A549 (cell line): ENCODE measurements at regions of chr7 and their contacts with region 1.

Region 1: DNA sequence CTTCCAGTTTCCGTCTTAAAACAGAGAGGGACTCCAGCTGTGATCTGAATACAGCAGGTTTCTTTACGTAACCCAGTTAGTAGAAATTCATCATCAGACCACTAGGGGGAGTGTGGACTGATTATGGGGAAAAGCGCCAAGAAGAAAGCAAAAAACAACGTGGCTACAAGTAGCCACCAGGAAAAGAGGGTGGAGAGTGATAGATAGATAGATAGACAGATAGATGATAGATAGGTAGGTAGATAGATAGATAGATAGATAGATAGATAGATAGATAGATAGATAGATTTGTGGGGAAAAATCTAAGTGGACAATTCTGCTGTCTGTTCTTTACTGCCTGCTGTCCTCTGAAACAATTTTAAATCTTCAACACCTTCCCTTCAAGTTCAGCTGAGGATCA is 12.7 kb upstream of the AKR1B10 start:
- DNase-seq: peak; percentile 91 to 92
- ATAC-seq: peak; percentile 63 to 71
- H3K4me3 ChIP-seq: no peak overlapping the region
- H3K27ac ChIP-seq: peak overlapping the region; percentile 68 to 83
- H3K4me1 ChIP-seq: peaks cover 37% of the 10 kb centered on the region
- CTCF ChIP-seq: peak; percentile 97
- EP300 ChIP-seq: no peak
- POLR2A ChIP-seq: no peak
- RAD21 ChIP-seq: peak; percentile 71 to 82

Region 2: DNA sequence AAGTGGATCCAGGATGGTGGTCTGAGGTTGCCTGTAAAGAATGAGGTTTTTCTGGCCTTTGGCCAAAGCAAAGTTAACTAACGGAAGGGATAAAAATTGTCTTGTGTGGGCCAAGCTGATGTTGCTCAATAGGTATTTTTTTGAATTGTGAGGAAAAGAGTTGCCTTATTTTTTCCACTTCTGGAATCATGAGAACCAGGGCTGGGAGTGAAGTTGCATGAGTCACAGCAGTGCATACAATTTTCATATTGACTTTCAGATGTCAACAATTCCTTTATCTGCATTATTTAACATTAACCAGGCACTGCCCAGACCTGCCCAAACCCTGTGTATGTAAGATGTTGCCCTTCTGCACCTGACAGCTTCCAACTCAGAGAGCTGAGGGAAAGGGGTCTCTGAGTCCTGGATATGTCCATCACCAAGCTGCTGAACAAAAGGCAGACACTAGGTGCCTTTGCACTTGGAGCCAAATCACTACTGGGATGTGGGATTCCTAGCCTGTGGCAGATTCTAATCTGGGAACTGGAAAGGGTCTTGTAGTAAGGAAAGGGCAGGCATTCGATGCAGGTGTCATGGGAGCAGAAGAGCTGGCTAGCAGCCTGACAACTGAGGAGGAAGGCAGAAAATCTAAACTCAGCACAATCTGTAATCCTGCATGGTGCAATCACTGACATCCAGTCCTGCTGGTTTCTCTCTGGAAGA is 145.7 kb before region 1 on chr7:
- CTCF ChIA-PET with region 1: interaction called, 31 read pairs
- POLR2A ChIA-PET with region 1: interaction called, 3 read pairs
- DNase-seq: peak; percentile 81 to 97
- ATAC-seq: peak; percentile 45 to 81
- H3K4me3 ChIP-seq: no peak overlapping the region
- H3K27ac ChIP-seq: peak overlapping the region; percentile 89 to 90
- H3K4me1 ChIP-seq: peaks cover 61% of the 10 kb centered on the region
- CTCF ChIP-seq: no peak
- EP300 ChIP-seq: peak; percentile 96 to 97
- POLR2A ChIP-seq: no peak
- RAD21 ChIP-seq: peak in 1 of 2 experiments; percentile 69; a peak in 4 of 5 replicates

Region 3: DNA sequence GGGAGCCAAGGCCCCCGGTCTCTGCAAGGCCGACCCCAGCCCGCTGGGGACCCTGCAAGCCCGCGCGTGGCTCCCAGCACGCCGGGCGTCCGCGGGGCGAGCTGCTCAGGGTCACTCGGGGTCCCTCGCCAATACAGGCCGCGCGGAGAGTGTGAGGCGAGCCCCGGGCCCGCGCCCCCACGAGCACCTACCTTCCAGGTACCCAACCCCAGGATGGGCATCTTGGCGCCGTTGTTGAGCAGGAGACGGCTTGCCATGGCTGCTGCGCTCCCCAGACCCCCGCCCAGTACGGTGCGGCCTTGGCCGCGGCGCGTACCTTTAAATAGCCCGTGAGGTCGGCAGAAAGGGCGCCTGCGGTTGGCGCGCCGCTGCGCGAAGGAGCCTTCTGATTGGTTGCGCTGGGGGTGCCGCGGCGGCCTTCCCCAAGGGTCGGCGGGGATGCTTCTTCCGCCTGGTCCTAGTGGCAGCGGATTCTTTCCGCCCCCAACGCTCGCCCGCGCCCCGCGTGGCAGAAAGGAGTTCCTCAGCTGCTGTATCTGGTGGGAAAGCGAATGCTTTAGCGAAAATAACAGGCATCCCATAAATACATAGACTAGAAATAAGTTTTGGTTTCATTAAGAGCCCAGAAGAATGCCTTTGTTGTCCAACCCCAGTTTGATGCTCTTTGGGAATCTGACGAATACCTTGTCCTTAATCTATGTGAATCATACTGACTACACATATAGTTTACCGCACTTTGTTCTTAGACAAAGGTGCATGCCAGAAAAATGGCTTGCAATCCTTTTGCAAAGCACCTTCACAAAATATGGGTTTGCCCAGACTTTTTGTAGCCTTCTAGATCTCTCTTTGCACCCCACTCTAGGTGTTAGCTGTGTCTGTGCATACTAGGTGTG is 55.6 kb before region 1 on chr7 and contains the start of gene AKR1B1:
- CTCF ChIA-PET with region 1: interaction called, 486 read pairs
- POLR2A ChIA-PET with region 1: interaction called, 3 read pairs
- DNase-seq: peak; percentile 98 to 99
- ATAC-seq: peak; percentile 93 to 94
- H3K4me3 ChIP-seq: peak within 1 kb of the TSS; percentile 86
- H3K27ac ChIP-seq: peak within 1 kb of the TSS; percentile 93 to 94
- H3K4me1 ChIP-seq: peaks cover 72% of the 10 kb centered on the region
- CTCF ChIP-seq: peak; percentile 56
- EP300 ChIP-seq: no peak
- POLR2A ChIP-seq: peak; percentile 99
- RAD21 ChIP-seq: peak; percentile 10 to 56; a peak in 3 of 5 replicates
- polyA plus RNA-seq, gene AKR1B1: 1,636 and 1,761 TPM in 2 replicates

Region 4: GRCh38 chr7:134491963-134492362 is 22.7 kb before region 1 on chr7:
- CTCF ChIA-PET with region 1: interaction called, 199 read pairs
- POLR2A ChIA-PET with region 1: no interaction called
- DNase-seq: no peak
- ATAC-seq: no peak
- H3K4me3 ChIP-seq: no peak overlapping the region
- H3K27ac ChIP-seq: no peak overlapping the region
- H3K4me1 ChIP-seq: no peaks in the 10 kb centered on the region
- CTCF ChIP-seq: no peak
- EP300 ChIP-seq: no peak
- POLR2A ChIP-seq: no peak
- RAD21 ChIP-seq: no peak

Region 5: DNA sequence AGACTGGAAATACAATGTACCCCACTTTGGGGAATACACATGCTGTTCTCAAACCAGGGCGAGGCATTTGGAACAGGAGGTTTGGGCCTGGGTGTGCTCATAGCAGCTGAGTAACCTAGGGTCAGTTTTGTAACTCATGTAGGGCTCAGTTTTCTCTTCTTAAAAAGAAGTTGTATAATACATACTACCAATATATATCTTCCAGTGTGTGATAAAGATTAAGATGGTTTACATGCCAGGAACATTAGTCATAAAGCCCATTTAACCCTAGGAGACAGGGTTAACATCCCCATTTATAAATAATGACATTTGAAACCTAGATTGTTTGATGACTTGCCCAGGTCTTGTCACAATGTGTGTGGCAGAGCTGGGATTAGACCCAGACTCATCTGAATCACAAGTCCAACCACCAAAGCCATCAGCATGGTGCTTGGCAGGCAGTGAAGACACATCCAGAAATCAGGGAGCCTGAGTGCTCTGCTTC is 18.7 kb after region 1 on chr7:
- CTCF ChIA-PET with region 1: interaction called, 914 read pairs
- POLR2A ChIA-PET with region 1: no interaction called
- DNase-seq: no peak
- ATAC-seq: peak in 1 of 2 experiments; percentile 6; a peak in 3 of 6 replicates
- H3K4me3 ChIP-seq: peak overlapping the region; percentile 84
- H3K27ac ChIP-seq: peak overlapping the region; percentile 91 to 98
- H3K4me1 ChIP-seq: peaks cover 72% of the 10 kb centered on the region
- CTCF ChIP-seq: no peak
- EP300 ChIP-seq: peak; percentile 27 to 74; a peak in 3 of 5 replicates
- POLR2A ChIP-seq: no peak
- RAD21 ChIP-seq: 0 out of 5 replicates have a peak, but pooled peaks of 1 of the 2 experiments have one; percentile 10

Region 6: GRCh38 chr7:134593530-134594392 is 79.1 kb after region 1 on chr7:
- CTCF ChIA-PET with region 1: interaction called, 16 read pairs
- POLR2A ChIA-PET with region 1: no interaction called
- DNase-seq: peak; percentile 63 to 98
- ATAC-seq: peak; percentile 94 to 96
- H3K4me3 ChIP-seq: no peak overlapping the region
- H3K27ac ChIP-seq: peak overlapping the region; percentile 87 to 90
- H3K4me1 ChIP-seq: peaks cover 37% of the 10 kb centered on the region
- CTCF ChIP-seq: no peak
- EP300 ChIP-seq: peak; percentile 63 to 86; a peak in 3 of 5 replicates
- POLR2A ChIP-seq: no peak
- RAD21 ChIP-seq: peak; percentile 27 to 55; a peak in 4 of 5 replicates

Region 7: DNA sequence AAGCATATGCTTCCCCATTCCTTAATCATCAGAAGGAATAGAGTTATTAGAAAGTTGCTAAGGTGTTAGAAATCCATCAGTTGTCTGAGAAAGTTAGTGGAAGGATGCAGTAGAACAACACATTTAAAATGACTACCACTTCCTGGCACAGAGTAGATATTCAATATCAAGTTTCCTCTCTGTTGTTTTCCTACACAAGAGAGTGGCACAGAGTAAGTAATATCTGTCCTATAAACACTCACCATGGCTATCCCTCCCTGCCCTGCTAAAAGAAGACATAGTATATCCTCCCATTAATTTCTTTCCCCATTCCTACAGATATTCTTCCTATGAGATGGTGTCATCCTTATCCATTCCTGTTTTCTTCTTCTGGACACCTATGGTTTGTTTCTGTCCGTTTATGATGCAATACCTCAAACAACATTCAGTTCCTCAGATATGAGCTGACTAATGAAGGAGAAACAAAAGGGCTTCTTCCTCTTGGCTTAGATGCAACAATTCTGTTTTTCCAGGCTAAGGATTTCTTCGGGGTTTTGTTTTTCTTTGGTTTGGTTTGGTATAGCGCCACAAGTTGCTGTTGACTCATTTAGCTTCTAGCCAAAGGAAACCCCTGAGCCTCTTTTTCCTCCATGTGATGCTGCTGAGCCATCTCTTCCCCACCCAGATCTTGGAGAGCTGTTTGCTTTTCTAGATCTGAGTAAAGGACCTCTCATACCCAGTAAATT is 99.1 kb after region 1 on chr7:
- CTCF ChIA-PET with region 1: interaction called, 453 read pairs
- POLR2A ChIA-PET with region 1: no interaction called
- DNase-seq: peak; percentile 57 to 86
- ATAC-seq: peak; percentile 90 to 94
- H3K4me3 ChIP-seq: no peak overlapping the region
- H3K27ac ChIP-seq: peak overlapping the region; percentile 72 to 80
- H3K4me1 ChIP-seq: peaks cover 25% of the 10 kb centered on the region
- CTCF ChIP-seq: no peak
- EP300 ChIP-seq: peak; percentile 50 to 73; a peak in 3 of 5 replicates
- POLR2A ChIP-seq: no peak
- RAD21 ChIP-seq: peak; percentile 7 to 46; a peak in 3 of 5 replicates